HepG2 (cell line): ENCODE measurements at regions of chr6 and their contacts with region 1.

Region 1: GRCh38 chr6:155314092-155314772 is at the start of gene TFB1M:
- DNase-seq: peak; percentile 99
- ATAC-seq: peak; percentile 97
- H3K4me3 ChIP-seq: peak within 1 kb of the TSS; percentile 74 to 97 (median 93)
- H3K27ac ChIP-seq: peak within 1 kb of the TSS; percentile 92
- H3K4me1 ChIP-seq: peaks cover 65% of the 10 kb centered on the region
- H3K27me3 ChIP-seq: no peaks in the 10 kb centered on the region; a peak in 1 of 5 replicates
- CTCF ChIP-seq: no peak; the same call in 1 of the 2 replicates
- EP300 ChIP-seq: no peak; a peak in 1 of 4 replicates
- POLR2A ChIP-seq: peak; percentile 91 to 95
- RAD21 ChIP-seq: peak; percentile 56
- total RNA-seq, gene TFB1M: 122 and 149 TPM in 2 replicates

Region 2: GRCh38 chr6:155303361-155303870 is 10.8 kb before region 1 on chr6:
- CTCF ChIA-PET with region 1: no interaction called
- POLR2A ChIA-PET with region 1: interaction called, 10 read pairs
- in situ Hi-C with region 1: no loop called
- intact Hi-C with region 1: no loop called
- DNase-seq: no peak
- ATAC-seq: no peak
- H3K4me3 ChIP-seq: no peak overlapping the region
- H3K27ac ChIP-seq: no peak overlapping the region
- H3K4me1 ChIP-seq: peaks cover 35% of the 10 kb centered on the region
- H3K27me3 ChIP-seq: no peaks in the 10 kb centered on the region
- CTCF ChIP-seq: no peak
- EP300 ChIP-seq: no peak
- POLR2A ChIP-seq: no peak
- RAD21 ChIP-seq: no peak

Region 3: GRCh38 chr6:156087487-156087886 is 773.3 kb after region 1 on chr6:
- CTCF ChIA-PET with region 1: no interaction called
- POLR2A ChIA-PET with region 1: no interaction called
- in situ Hi-C with region 1: no loop called
- intact Hi-C with region 1: no loop called
- DNase-seq: no peak
- ATAC-seq: no peak
- H3K4me3 ChIP-seq: no peak overlapping the region
- H3K27ac ChIP-seq: no peak overlapping the region
- H3K4me1 ChIP-seq: no peaks in the 10 kb centered on the region
- H3K27me3 ChIP-seq: no peaks in the 10 kb centered on the region
- CTCF ChIP-seq: no peak
- EP300 ChIP-seq: no peak
- POLR2A ChIP-seq: no peak
- RAD21 ChIP-seq: no peak